HAP-1 (cell line): ENCODE measurements at regions of chr4 and their contacts with region 1.

Region 1: GRCh38 chr4:107913281-107913899 is 18.0 kb upstream of the CYP2U1 start:
- DNase-seq: peak; percentile 64 to 66
- H3K4me3 ChIP-seq: no peak overlapping the region
- H3K4me1 ChIP-seq: peaks cover 2% of the 10 kb centered on the region; the same call in 1 of the 2 replicates
- H3K27me3 ChIP-seq: no peaks in the 10 kb centered on the region

Region 2: GRCh38 chr4:107631560-107631959 is 281.8 kb before region 1 on chr4:
- in situ Hi-C with region 1: no loop called
- DNase-seq: no peak
- H3K4me3 ChIP-seq: no peak overlapping the region
- H3K4me1 ChIP-seq: no peaks in the 10 kb centered on the region
- H3K27me3 ChIP-seq: no peaks in the 10 kb centered on the region

Region 3: GRCh38 chr4:107757864-107758476 is 155.4 kb before region 1 on chr4:
- in situ Hi-C with region 1: loop called (anchors 10 kb)
- DNase-seq: peak in 1 of 2 experiments; percentile 65
- H3K4me3 ChIP-seq: no peak overlapping the region
- H3K4me1 ChIP-seq: peaks cover 26% of the 10 kb centered on the region
- H3K27me3 ChIP-seq: no peaks in the 10 kb centered on the region

Region 4: DNA sequence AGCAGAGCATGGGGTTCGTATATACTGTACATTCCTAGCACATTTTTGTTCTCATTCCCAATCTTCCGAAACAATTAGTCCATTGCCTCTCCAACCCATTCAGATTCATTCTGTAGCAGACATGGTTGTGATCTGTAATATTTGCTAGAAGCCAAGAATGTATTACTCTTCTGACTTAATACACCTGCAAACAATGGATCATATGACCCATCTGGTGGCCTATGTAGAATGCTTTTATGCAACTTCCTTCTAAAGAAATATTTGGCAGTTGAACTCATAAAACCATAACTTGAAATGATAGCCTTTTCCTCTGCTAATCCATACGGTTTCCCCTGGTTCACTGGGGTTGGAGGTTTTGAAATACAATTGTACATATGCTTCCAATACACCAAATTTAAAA is 121.5 kb before region 1 on chr4:
- in situ Hi-C with region 1: no loop called
- DNase-seq: no peak
- H3K4me3 ChIP-seq: no peak overlapping the region
- H3K4me1 ChIP-seq: no peaks in the 10 kb centered on the region
- H3K27me3 ChIP-seq: no peaks in the 10 kb centered on the region

Region 5: DNA sequence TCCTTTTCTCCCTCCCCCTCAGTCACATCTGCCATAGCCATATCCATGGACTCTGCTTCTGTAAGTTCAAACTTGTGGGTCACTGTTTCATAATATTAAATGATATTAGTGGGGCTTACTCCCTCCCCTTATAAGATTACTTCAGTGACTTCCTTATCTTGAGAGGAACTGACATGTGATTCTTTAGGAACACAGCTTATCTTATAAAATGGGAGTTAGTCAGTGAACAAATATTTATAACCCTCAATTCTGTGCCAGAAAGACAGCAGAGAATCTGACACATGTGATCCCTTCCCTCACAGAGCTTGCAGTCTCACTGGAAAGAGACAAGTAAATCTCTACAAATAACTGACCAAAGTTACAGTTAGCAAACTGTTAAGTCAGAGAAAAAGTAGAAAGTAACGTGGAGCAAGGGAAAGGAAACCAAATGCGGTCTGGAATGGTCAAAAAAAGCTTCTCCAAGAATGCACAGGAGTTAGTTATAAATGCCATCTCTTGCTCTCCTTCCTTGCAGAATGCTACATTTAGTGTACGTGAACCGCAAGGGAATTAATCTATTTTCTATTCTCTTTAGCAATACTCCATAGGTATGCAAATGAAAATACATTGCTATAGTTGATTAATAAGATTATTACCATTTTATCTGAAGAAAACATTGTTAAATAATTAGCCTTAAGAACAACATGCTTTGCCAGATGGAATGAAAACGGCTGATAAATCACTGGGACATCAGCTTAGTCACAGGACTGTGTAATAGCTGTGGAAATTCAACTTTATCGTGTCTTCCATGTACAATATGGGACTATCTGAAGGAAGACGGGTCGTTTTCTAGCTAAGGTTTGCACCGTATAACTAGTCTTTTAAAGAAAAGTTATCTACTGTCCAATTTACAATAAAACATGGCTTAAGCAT is 59.7 kb before region 1 on chr4:
- in situ Hi-C with region 1: loop called (anchors 10 kb)
- DNase-seq: no peak
- H3K4me3 ChIP-seq: no peak overlapping the region
- H3K4me1 ChIP-seq: peaks cover 62% of the 10 kb centered on the region
- H3K27me3 ChIP-seq: no peaks in the 10 kb centered on the region